ENCODE measurements at regions of chr20 and their contacts with region 1.

Region 1: DNA sequence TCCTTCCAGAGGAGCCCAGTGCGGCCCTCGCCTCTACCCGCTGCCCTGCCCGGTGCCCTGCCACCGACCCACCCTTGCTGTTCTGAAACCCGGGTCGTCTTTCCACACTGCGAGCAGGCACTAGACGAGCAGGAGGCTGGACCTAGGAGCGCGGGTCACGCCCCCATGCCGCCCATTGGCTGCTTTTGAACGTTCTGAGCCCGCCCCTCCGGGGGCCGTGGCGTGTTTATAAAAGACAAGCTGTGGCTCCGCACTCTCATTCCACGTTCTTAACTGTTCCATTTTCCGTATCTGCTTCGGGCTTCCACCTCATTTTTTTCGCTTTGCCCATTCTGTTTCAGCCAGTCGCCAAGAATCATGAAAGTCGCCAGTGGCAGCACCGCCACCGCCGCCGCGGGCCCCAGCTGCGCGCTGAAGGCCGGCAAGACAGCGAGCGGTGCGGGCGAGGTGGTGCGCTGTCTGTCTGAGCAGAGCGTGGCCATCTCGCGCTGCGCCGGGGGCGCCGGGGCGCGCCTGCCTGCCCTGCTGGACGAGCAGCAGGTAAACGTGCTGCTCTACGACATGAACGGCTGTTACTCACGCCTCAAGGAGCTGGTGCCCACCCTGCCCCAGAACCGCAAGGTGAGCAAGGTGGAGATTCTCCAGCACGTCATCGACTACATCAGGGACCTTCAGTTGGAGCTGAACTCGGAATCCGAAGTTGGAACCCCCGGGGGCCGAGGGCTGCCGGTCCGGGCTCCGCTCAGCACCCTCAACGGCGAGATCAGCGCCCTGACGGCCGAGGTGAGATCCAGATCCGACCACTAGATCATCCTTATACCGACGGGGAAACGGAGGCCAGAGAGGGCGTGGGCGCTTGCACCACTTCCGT is at the start of gene ID1:
- DNase-seq: peak; percentile 78 to 93 (median 89)
- ATAC-seq: peak; percentile 89
- H3K4me3 ChIP-seq: peak within 1 kb of the TSS; percentile 57 to 68
- H3K4me3 Mint-ChIP-seq: peak within 1 kb of the TSS; percentile 93
- H3K27ac ChIP-seq: peak within 1 kb of the TSS in 1 of 2 experiments; percentile 30
- H3K27ac Mint-ChIP-seq: peak within 1 kb of the TSS; percentile 60
- H3K4me1 ChIP-seq: peaks cover 24% of the 10 kb centered on the region
- H3K4me1 Mint-ChIP-seq: peaks cover 26% of the 10 kb centered on the region
- H3K27me3 ChIP-seq: peaks cover 5 to 27% of the 10 kb centered on the region in 2 experiments
- H3K27me3 Mint-ChIP-seq: peaks cover 43% of the 10 kb centered on the region
- CTCF ChIP-seq: no peak
- total RNA-seq, gene ID1: 8.1 to 11.0 TPM

Region 2: GRCh38 chr20:31572701-31573554 is 32.3 kb before region 1 on chr20:
- CTCF ChIA-PET with region 1: interaction called, 427 read pairs
- POLR2A ChIA-PET with region 1: interaction called, 26 read pairs
- intact Hi-C with region 1: loop called (anchors 1 kb)
- DNase-seq: peak; percentile 75 to 93 (median 85)
- ATAC-seq: peak; percentile 91
- H3K4me3 ChIP-seq: peak overlapping the region; percentile 75 to 79
- H3K4me3 Mint-ChIP-seq: peak overlapping the region; percentile 87
- H3K27ac ChIP-seq: peak overlapping the region; percentile 51 to 78
- H3K27ac Mint-ChIP-seq: peak overlapping the region; percentile 84
- H3K4me1 ChIP-seq: peaks cover 16% of the 10 kb centered on the region
- H3K4me1 Mint-ChIP-seq: peaks cover 26% of the 10 kb centered on the region
- H3K27me3 ChIP-seq: no peaks in the 10 kb centered on the region
- H3K27me3 Mint-ChIP-seq: no peaks in the 10 kb centered on the region
- CTCF ChIP-seq: no peak

Region 3: DNA sequence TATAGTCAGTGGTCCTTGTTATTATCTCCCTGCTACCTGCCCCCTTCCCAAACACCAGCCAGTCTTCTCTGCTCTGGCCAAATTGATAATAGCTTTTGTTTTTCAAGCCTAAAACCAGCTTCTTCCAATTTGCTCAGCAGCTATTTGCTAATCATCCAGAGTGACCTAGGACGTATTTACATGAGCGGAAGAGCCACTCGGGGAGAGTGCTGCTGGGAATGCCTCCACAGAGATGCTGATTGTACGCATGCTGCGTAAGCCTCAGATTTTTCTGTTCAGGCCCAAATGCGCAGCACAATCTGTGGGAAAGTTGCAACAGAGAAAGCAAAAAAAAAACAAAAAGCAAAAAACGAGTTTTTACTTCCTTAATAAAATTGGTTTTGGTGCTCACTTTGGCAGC is 24.6 kb before region 1 on chr20:
- CTCF ChIA-PET with region 1: interaction called, 427 read pairs
- POLR2A ChIA-PET with region 1: interaction called, 12 read pairs
- intact Hi-C with region 1: no loop called
- DNase-seq: no peak
- ATAC-seq: no peak
- H3K4me3 ChIP-seq: no peak overlapping the region
- H3K4me3 Mint-ChIP-seq: no peak overlapping the region
- H3K27ac ChIP-seq: no peak overlapping the region
- H3K27ac Mint-ChIP-seq: no peak overlapping the region
- H3K4me1 ChIP-seq: peaks cover 4% of the 10 kb centered on the region
- H3K4me1 Mint-ChIP-seq: peaks cover 12% of the 10 kb centered on the region
- H3K27me3 ChIP-seq: no peaks in the 10 kb centered on the region
- H3K27me3 Mint-ChIP-seq: peaks cover 6% of the 10 kb centered on the region
- CTCF ChIP-seq: no peak

Region 4: DNA sequence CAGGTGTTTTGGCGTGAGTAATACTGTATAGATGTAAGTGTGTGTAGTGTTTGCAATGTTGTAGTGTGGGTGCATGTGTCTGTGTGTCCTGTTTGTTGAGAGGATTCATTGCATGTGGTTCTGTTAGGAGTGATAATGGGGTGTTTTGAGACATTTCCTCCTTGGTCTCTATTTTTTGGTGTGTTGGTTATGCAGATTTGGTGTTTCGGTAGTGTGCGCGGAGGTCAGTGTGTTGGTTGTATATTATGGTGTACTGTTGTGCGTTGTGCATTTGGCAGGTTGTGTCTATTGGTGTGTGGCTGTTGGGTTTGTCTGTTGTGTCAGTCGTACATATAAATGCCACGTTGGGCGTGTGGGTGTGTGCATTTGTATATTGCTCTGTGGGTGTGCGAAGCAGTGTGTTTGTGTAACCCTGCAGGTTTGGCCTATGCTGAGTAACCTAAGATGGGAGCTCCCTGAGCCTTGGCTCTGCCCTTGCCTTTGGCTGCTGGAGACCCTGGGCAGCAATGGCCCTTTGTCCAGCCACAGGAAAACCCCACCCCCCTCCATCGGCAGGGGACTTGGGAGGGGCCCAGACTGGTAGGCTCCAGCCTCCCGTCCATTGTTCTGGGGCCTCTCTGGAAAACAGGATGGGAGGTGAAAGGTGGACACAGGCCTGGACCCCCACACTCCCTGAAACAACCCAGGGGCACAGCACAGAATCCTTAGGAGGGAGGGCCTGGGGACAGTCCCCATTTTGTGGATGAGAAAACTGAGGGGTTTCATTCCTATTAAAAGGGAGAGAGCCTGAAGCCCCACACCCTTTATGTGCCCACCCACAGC is 10.5 kb before region 1 on chr20:
- CTCF ChIA-PET with region 1: no interaction called
- POLR2A ChIA-PET with region 1: no interaction called
- intact Hi-C with region 1: no loop called
- DNase-seq: no peak
- ATAC-seq: no peak
- H3K4me3 ChIP-seq: no peak overlapping the region
- H3K4me3 Mint-ChIP-seq: no peak overlapping the region
- H3K27ac ChIP-seq: no peak overlapping the region
- H3K27ac Mint-ChIP-seq: no peak overlapping the region
- H3K4me1 ChIP-seq: no peaks in the 10 kb centered on the region
- H3K4me1 Mint-ChIP-seq: no peaks in the 10 kb centered on the region
- H3K27me3 ChIP-seq: peaks cover 0 to 3% of the 10 kb centered on the region in 2 experiments
- H3K27me3 Mint-ChIP-seq: peaks cover 3% of the 10 kb centered on the region
- CTCF ChIP-seq: no peak

Region 5: DNA sequence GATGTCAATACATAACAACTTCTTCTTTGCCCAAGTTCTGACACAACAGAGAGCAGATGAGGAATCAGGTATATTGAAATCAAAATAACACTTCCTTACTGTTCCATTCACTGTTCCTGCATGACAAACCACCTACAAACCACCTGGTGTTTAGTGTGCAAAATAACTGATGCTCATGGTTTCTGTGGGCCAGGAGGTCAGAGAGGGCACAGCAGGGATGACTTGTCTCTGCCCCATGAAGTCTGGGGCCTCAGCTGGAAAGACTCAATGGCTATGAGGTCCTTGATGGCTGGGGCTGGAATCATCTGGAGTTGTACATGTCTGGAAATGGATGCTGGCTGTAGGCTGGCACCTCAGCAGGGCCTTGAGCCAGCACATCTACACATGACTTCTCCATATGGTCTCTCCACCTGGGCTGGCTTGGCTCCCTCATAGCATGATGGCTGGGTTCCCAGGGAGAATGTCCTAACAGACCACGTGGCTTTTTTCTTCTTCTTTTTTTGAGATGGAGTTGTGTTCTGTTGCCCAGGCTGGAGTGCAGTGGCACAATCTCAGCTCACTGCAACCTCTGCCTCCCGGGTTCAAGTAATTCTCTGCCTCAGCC is 25.0 kb after region 1 on chr20:
- CTCF ChIA-PET with region 1: no interaction called
- POLR2A ChIA-PET with region 1: no interaction called
- intact Hi-C with region 1: no loop called
- DNase-seq: no peak
- ATAC-seq: no peak
- H3K4me3 ChIP-seq: no peak overlapping the region
- H3K4me3 Mint-ChIP-seq: no peak overlapping the region
- H3K27ac ChIP-seq: no peak overlapping the region
- H3K27ac Mint-ChIP-seq: no peak overlapping the region
- H3K4me1 ChIP-seq: no peaks in the 10 kb centered on the region
- H3K4me1 Mint-ChIP-seq: no peaks in the 10 kb centered on the region
- H3K27me3 ChIP-seq: no peaks in the 10 kb centered on the region
- H3K27me3 Mint-ChIP-seq: no peaks in the 10 kb centered on the region
- CTCF ChIP-seq: no peak